ENCODE measurements at regions of chr4 and their contacts with region 1.

Region 1: GRCh38 chr4:102543030-102543928 is 42.1 kb downstream of the NFKB1 start:
- DNase-seq: peak; percentile 76
- ATAC-seq: peak; percentile 80
- H3K4me3 ChIP-seq: no peak overlapping the region
- H3K27ac ChIP-seq: peak overlapping the region; percentile 60
- H3K4me1 ChIP-seq: peaks cover 47% of the 10 kb centered on the region
- H3K27me3 ChIP-seq: no peaks in the 10 kb centered on the region
- CTCF ChIP-seq: no peak
- EP300 ChIP-seq: peak in 1 of 2 experiments; percentile 78; a peak in 3 of 4 replicates
- POLR2A ChIP-seq: no peak
- RAD21 ChIP-seq: no peak

Region 2: DNA sequence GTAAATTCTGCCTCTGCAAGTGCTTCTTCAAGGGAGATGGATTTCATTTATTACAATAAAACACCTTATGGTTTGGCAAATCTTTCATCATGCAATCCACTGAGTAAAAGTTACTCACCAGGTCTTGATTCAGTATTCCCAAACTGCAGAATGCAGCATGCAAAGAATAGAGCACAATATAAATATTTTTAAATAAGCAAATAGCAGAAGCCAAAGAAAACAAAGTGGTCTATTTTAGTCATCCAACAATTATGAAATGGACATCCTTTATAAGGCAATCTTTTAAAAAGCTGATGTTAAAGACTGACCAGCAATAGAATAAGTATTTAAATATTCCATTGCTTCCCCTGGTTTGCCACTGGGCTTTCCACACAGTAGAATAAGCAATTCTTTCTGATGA is 257.4 kb before region 1 on chr4:
- CTCF ChIA-PET with region 1: no interaction called
- POLR2A ChIA-PET with region 1: no interaction called
- RAD21 ChIA-PET with region 1: no interaction called
- SMC1A ChIA-PET with region 1: no interaction called
- in situ Hi-C with region 1: no loop called
- intact Hi-C with region 1: no loop called
- DNase-seq: no peak
- ATAC-seq: no peak
- H3K4me3 ChIP-seq: no peak overlapping the region
- H3K27ac ChIP-seq: no peak overlapping the region
- H3K4me1 ChIP-seq: no peaks in the 10 kb centered on the region
- H3K27me3 ChIP-seq: no peaks in the 10 kb centered on the region
- CTCF ChIP-seq: no peak
- EP300 ChIP-seq: no peak
- POLR2A ChIP-seq: no peak
- RAD21 ChIP-seq: no peak

Region 3: DNA sequence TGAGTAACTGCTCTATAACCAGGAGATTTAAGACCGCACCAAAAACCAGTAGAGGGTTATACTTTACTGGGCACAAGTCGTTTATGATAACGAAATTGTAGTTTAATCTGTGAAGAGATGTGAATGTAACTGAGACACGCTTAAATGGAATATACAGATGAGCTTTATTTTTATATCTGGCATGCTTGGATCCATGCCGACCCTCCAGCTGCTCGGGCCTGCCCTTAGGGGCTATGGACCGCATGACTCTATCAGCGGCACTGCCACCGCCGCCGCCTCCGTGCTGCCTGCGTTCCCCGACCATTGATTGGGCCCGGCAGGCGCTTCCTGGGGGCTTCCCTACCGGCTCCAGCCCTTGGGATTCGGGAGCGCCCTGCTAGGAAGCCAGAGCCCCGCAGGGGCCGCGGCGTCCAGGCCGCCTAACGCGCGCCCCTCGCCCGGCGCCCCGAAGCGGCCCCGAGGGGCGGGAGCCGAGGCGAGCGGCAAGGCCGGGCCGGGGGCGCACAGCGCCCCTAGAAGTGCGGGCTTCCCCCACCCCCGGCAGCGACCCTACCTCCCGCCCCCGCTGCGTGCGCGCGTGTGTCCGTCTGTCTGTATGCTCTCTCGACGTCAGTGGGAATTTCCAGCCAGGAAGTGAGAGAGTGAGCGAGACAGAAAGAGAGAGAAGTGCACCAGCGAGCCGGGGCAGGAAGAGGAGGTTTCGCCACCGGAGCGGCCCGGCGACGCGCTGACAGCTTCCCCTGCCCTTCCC is 42.4 kb before region 1 on chr4 and contains the start of gene NFKB1:
- CTCF ChIA-PET with region 1: interaction called, 4 read pairs
- POLR2A ChIA-PET with region 1: interaction called, 4 read pairs
- RAD21 ChIA-PET with region 1: interaction called, 8 read pairs
- SMC1A ChIA-PET with region 1: interaction called, 9 read pairs
- in situ Hi-C with region 1: no loop called
- intact Hi-C with region 1: loop called (anchors 5 kb)
- DNase-seq: peak; percentile 55
- ATAC-seq: peak; percentile 48
- H3K4me3 ChIP-seq: peak within 1 kb of the TSS; percentile 75
- H3K27ac ChIP-seq: peak within 1 kb of the TSS; percentile 97
- H3K4me1 ChIP-seq: peaks cover 3% of the 10 kb centered on the region; the same call in 1 of the 2 replicates
- H3K27me3 ChIP-seq: no peaks in the 10 kb centered on the region
- CTCF ChIP-seq: no peak
- EP300 ChIP-seq: peak in 1 of 2 experiments; percentile 65; a peak in 1 of 4 replicates
- POLR2A ChIP-seq: peak; percentile 83; the same call in 1 of the 2 replicates
- RAD21 ChIP-seq: no peak
- polyA plus RNA-seq, gene NFKB1: 20.8 to 32.7 TPM

Region 4: DNA sequence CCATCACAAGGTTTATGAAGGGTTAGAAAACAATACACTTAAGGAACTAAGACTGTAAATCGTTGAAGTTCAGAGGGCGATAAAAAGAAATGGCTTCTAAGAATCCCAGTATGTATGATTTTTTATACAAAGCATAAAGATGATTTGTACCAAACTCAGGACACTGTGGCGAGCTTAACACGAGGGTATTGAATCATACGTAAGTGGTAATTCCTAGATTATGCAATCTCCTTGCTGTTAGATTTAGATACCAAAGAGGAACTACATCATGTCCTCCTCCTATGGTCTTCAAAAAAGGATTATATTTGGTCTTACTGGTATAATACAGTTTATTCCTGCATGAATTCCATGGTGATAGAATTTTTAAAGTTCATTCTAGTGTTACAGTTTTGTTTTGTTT is 18.2 kb before region 1 on chr4:
- CTCF ChIA-PET with region 1: interaction called, 10 read pairs
- POLR2A ChIA-PET with region 1: interaction called, 7 read pairs
- RAD21 ChIA-PET with region 1: interaction called, 13 read pairs
- SMC1A ChIA-PET with region 1: interaction called, 54 read pairs
- in situ Hi-C with region 1: no loop called
- intact Hi-C with region 1: no loop called
- DNase-seq: no peak
- ATAC-seq: no peak
- H3K4me3 ChIP-seq: no peak overlapping the region
- H3K27ac ChIP-seq: no peak overlapping the region
- H3K4me1 ChIP-seq: peaks cover 20% of the 10 kb centered on the region
- H3K27me3 ChIP-seq: no peaks in the 10 kb centered on the region
- CTCF ChIP-seq: no peak
- EP300 ChIP-seq: no peak
- POLR2A ChIP-seq: no peak
- RAD21 ChIP-seq: no peak

Region 5: GRCh38 chr4:102564399-102565059 is 21.2 kb after region 1 on chr4:
- CTCF ChIA-PET with region 1: interaction called, 6 read pairs
- POLR2A ChIA-PET with region 1: interaction called, 52 read pairs
- RAD21 ChIA-PET with region 1: interaction called, 7 read pairs
- SMC1A ChIA-PET with region 1: interaction called, 39 read pairs
- in situ Hi-C with region 1: no loop called
- intact Hi-C with region 1: loop called (anchors 1 kb)
- DNase-seq: peak; percentile 91
- ATAC-seq: peak; percentile 87
- H3K4me3 ChIP-seq: no peak overlapping the region; the same call in 1 of the 2 replicates
- H3K27ac ChIP-seq: peak overlapping the region; percentile 65
- H3K4me1 ChIP-seq: peaks cover 45% of the 10 kb centered on the region
- H3K27me3 ChIP-seq: no peaks in the 10 kb centered on the region
- CTCF ChIP-seq: no peak
- EP300 ChIP-seq: peak; percentile 84 to 94; a peak in 3 of 4 replicates
- POLR2A ChIP-seq: no peak
- RAD21 ChIP-seq: peak; percentile 13; the same call in 1 of the 2 replicates

Region 6: GRCh38 chr4:102586644-102587021 is 43.4 kb after region 1 on chr4:
- CTCF ChIA-PET with region 1: interaction called, 3 read pairs
- POLR2A ChIA-PET with region 1: interaction called, 8 read pairs
- RAD21 ChIA-PET with region 1: interaction called, 20 read pairs
- SMC1A ChIA-PET with region 1: interaction called, 22 read pairs
- in situ Hi-C with region 1: no loop called
- intact Hi-C with region 1: no loop called
- DNase-seq: peak; percentile 36
- ATAC-seq: peak; percentile 63
- H3K4me3 ChIP-seq: no peak overlapping the region
- H3K27ac ChIP-seq: peak overlapping the region; percentile 77
- H3K4me1 ChIP-seq: peaks cover 26% of the 10 kb centered on the region
- H3K27me3 ChIP-seq: no peaks in the 10 kb centered on the region
- CTCF ChIP-seq: no peak
- EP300 ChIP-seq: no peak
- POLR2A ChIP-seq: no peak
- RAD21 ChIP-seq: no peak

Measured in GM12878 (cell line).